ENCODE measurements at regions of chr16 and their contacts with region 1.

Region 1: DNA sequence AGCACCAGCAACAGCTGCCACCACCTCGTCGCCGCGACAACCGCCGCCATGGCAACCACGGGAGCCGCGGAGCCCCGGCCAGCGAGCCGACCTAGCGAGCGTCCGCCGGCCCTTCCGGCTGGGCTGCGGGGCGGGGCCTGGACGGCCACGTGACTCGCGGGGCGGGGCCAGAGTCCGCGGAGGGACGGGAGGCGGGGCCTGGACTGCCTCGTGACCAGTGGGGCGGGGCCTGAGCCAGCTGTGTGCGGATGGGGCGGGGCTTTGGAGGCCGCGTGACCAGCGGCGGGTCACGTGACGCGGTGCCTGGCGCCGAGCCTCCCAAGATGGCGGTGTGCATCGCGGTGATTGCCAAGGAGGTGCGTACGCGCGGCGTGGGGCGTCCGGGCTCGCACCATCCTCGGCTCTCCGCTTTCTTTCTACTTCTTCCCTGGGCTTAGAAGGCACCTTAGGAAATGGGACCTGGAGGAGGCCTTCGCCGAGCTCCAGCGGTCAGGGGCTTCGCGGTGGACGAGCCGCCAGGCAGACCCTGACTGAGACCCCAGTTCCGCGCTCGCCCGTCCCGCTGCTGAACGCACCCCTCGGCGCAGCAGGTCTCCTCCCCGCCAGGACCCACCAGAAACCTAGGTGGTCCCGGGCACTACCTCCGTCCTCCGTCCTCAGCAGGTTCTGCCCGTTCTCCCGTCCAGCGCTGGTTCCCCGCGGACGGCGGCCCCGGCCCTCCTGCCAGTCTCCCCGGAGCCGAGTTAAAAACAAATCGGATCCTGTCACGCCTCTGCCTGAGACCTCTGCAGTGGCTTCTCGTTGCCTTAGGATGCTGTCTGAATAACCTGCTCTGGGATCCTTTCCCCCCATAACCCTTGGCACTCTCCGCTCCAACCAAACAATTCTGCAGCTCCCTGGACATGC is at the starts of genes GALNS and TRAPPC2L:
- DNase-seq: peak; percentile 99
- ATAC-seq: peak; percentile 88
- H3K4me3 Mint-ChIP-seq: peak within 1 kb of the TSS; percentile 92
- H3K27ac Mint-ChIP-seq: peak within 1 kb of the TSS; percentile 86
- H3K4me1 Mint-ChIP-seq: peaks cover 39% of the 10 kb centered on the region
- H3K27me3 Mint-ChIP-seq: no peaks in the 10 kb centered on the region
- CTCF ChIP-seq: no peak
- total RNA-seq, gene GALNS: 39.9 and 48.3 TPM in 2 replicates
- total RNA-seq, gene TRAPPC2L: 38.7 and 54.8 TPM in 2 replicates

Region 2: DNA sequence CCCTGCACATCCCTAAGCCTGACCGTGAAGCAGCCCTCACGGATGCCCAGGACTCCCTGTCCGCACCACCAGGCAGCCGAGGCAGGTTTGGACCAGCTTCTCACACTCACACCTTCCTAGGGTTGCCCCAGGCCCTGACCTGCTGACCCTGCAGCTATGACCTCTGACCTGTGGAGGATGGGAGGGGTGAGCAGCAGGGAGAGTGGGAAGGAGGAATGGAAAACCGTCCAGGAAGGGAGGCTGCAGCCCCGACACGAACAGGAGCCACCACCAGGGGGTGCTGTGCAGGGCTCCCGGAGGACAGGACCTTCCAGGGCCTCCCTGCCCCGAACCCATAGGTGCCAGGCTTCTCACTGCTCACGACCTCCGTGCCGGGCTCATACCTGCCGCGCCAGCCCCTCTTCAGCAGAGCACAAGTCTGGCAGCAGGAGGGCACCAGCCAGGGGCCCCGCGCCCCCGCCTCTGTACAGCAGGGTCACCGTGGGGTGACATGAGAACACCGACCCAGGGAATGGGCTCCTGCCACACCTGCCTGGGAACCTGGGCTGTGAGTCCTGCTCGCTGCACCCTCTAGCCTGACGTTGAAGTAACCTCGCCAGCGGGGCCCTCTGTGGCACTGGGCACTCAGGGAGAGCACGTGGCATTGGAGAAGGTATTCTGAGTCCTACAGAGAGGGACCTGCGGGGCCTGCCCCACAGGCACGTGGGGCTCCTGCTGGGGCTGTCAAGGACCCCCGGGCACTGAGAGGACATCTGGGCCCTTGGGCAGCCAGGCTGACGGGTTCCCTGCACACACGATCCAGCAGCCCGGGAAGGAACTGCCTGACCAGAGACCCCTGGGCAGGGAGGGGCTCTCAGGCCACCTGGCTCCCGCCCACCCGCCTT is 113.1 kb before region 1 on chr16:
- CTCF ChIA-PET with region 1: interaction called, 9 read pairs
- POLR2A ChIA-PET with region 1: interaction called, 6 read pairs
- intact Hi-C with region 1: loop called (anchors 2 kb)
- DNase-seq: peak; percentile 67
- ATAC-seq: no peak
- H3K4me3 Mint-ChIP-seq: no peak overlapping the region
- H3K27ac Mint-ChIP-seq: no peak overlapping the region
- H3K4me1 Mint-ChIP-seq: peaks cover 55% of the 10 kb centered on the region
- H3K27me3 Mint-ChIP-seq: no peaks in the 10 kb centered on the region
- CTCF ChIP-seq: peak; percentile 89

Region 3: DNA sequence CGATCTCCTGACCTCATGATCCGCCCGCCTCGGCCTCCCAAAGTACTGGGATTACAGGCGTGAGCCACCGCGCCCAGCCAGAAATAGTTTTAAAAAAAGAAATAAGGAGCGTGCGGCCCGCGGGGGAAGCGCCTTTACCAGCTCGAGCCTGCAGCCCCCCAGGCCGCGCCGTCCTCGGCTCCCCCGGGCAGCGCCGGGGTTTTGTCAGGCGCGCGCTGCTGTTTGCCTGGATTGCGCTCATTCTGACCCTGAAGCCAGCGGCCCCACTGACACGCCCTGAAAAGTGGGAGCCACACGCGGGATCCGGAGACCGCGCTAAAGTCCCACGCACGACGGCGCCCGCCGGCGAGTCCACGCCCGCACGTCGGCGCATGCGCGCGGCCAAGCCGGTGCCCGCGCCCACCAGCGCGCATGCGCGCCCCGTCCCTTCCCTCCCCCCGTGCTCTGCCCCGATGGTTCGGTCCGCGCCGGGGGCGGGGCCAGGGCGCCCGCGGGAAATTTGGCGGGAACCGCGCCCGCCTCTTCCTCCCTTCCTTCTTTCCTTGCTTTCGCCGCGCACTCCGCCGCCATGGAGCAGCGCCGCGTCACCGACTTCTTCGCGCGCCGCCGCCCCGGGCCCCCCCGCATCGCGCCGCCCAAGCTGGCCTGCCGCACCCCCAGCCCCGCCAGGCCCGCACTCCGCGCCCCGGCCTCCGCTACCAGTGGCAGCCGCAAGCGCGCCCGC is 53.7 kb before region 1 on chr16 and contains the start of gene CDT1:
- CTCF ChIA-PET with region 1: interaction called, 3 read pairs
- POLR2A ChIA-PET with region 1: no interaction called
- intact Hi-C with region 1: loop called (anchors 2 kb)
- DNase-seq: peak; percentile 88
- ATAC-seq: peak; percentile 64
- H3K4me3 Mint-ChIP-seq: peak within 1 kb of the TSS; percentile 79
- H3K27ac Mint-ChIP-seq: peak within 1 kb of the TSS; percentile 79
- H3K4me1 Mint-ChIP-seq: peaks cover 22% of the 10 kb centered on the region
- H3K27me3 Mint-ChIP-seq: no peaks in the 10 kb centered on the region
- CTCF ChIP-seq: no peak
- total RNA-seq, gene CDT1: 4.3 and 5.5 TPM in 2 replicates

Region 4: DNA sequence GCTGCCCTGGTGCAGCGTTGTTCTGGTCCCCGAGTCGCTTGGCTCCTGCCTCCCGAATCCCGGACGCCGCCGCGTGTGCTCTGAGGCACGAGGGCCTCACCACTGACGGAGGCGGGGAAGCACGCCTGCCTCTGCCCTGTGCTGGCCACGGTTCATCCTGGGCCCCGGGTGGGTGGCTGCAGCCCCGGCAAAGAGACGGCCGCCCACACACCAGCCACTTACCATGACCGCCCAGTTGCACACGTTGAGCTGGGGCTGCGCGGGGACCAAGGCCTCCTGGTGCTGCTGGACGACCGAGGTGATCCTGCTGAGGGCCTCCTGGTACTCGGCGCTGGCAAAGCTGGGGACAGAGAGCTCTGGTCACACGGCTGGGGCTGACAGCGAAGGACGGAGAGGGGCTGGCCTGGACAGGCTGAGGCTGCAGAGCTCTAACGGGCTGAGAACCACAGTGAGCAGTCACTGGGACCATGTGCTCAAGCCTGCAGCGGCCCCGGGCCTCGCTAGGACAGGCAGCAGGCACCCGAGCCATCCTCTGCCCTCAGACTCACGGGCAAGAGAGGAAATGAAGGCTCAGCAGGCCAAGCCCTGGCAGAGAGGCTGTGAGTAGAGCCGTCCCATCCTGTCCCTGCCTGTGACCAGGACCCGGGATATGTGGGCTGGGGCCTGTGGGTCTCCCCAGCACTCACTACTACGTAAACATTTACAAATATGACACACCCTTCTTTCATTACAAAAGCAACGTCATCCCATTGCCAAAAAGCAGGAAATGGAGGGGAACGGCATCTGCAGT is 39.1 kb before region 1 on chr16:
- CTCF ChIA-PET with region 1: interaction called, 11 read pairs
- POLR2A ChIA-PET with region 1: interaction called, 39 read pairs
- intact Hi-C with region 1: loop called (anchors 1 kb)
- DNase-seq: no peak
- ATAC-seq: no peak
- H3K4me3 Mint-ChIP-seq: no peak overlapping the region
- H3K27ac Mint-ChIP-seq: no peak overlapping the region
- H3K4me1 Mint-ChIP-seq: no peaks in the 10 kb centered on the region
- H3K27me3 Mint-ChIP-seq: no peaks in the 10 kb centered on the region
- CTCF ChIP-seq: no peak

Region 5: GRCh38 chr16:89171463-89172170 is 314.5 kb after region 1 on chr16 and contains the start of gene CDH15:
- CTCF ChIA-PET with region 1: no interaction called
- POLR2A ChIA-PET with region 1: no interaction called
- intact Hi-C with region 1: loop called (anchors 1 kb)
- DNase-seq: peak; percentile 84
- ATAC-seq: peak; percentile 96
- H3K4me3 Mint-ChIP-seq: peak within 1 kb of the TSS; percentile 66
- H3K27ac Mint-ChIP-seq: no peak within 1 kb of the TSS
- H3K4me1 Mint-ChIP-seq: peaks cover 12% of the 10 kb centered on the region
- H3K27me3 Mint-ChIP-seq: peaks cover 2% of the 10 kb centered on the region
- CTCF ChIP-seq: no peak
- total RNA-seq, gene CDH15: not detected in 2 replicates

Region 6: GRCh38 chr16:89193021-89193575 is 336.0 kb after region 1 on chr16:
- CTCF ChIA-PET with region 1: no interaction called
- POLR2A ChIA-PET with region 1: no interaction called
- intact Hi-C with region 1: no loop called
- DNase-seq: no peak
- ATAC-seq: no peak
- H3K4me3 Mint-ChIP-seq: no peak overlapping the region
- H3K27ac Mint-ChIP-seq: no peak overlapping the region
- H3K4me1 Mint-ChIP-seq: peaks cover 3% of the 10 kb centered on the region
- H3K27me3 Mint-ChIP-seq: peaks cover 2% of the 10 kb centered on the region
- CTCF ChIP-seq: no peak

Measured in activated B cell treated with CpG ODN at 0.5 μM for 24 hours (primary cell).